ENCODE measurements at regions of chr7 and their contacts with region 1.

Region 1: DNA sequence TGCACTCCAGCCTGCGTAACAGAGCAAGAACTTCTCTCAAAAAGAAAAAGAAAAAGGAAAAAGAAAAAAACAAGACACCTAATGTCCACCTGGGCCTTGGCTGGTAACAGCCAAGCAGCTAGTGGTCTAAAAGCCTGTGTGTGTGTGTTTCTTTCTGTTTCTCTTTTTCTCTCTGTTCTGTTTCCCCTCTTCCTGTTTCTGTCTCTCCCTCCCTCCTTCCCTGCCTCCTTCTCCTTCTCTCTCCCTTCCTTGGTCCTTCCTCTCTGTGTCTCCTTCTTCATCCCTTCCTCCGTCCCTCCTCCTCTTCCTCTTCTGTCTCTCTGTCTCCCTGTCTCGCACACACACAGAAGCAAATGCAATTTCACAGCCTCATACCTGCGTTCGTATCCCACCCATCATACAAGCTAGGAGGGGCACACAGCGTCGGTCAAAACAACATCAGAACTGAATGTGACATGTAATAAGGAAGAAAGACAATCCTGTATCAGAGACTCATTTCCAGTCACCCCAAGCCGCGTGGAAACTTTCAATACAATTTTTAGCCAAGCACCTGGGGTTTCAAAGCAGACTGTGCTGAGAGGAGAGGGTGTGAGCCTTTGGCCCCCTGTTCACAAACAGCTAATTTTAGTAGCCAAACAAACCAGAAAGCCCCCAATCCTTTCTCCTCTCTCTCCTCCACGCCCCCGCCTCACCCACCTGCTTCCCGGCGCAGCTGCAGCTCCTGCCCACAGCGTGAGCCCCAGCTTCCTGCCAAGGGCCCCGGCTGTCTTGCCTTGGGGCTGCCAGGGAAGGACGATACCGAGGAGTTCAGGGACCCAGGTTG is 50.2 kb upstream of the GNA12 start:
- DNase-seq: peak; percentile 83
- H3K4me3 Mint-ChIP-seq: peak overlapping the region; percentile 73
- H3K27ac Mint-ChIP-seq: peak overlapping the region; percentile 96
- H3K4me1 Mint-ChIP-seq: peaks cover 24% of the 10 kb centered on the region
- H3K27me3 Mint-ChIP-seq: no peaks in the 10 kb centered on the region

Region 2: DNA sequence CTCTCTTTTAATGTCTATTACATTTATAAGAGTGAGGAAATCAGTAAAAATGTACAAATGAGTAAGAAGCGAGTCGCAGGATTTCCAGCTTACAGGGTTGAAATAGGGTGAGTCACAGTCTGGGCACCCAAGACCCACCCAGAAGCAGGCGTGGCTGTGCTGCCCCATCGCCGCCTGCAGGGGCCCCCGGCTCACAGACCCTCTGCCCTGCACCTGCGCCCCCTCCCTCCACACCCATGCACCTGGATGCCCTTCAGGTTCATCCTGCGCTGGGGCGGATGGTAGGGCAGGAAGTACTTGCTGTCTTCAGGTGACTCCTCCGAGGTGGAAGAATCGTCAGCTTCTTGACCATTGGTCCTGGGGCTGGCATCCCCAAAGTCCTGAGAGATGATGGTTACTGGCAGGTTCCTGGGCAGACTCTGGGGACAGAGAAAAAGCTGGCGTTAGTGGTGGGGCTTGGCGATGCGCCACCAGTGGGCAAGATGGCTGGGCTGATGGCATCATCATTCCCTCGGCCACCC is 39.9 kb after region 1 on chr7:
- CTCF ChIA-PET with region 1: no interaction called
- intact Hi-C with region 1: loop called (anchors 1 kb)
- DNase-seq: peak; percentile 72
- H3K4me3 Mint-ChIP-seq: no peak overlapping the region
- H3K27ac Mint-ChIP-seq: peak overlapping the region; percentile 99
- H3K4me1 Mint-ChIP-seq: peaks cover 19% of the 10 kb centered on the region
- H3K27me3 Mint-ChIP-seq: no peaks in the 10 kb centered on the region

Region 3: GRCh38 chr7:3154912-3155494 is 260.7 kb after region 1 on chr7:
- CTCF ChIA-PET with region 1: interaction called, 8 read pairs
- intact Hi-C with region 1: loop called (anchors 2 kb)
- DNase-seq: peak; percentile 82
- H3K4me3 Mint-ChIP-seq: no peak overlapping the region
- H3K27ac Mint-ChIP-seq: no peak overlapping the region
- H3K4me1 Mint-ChIP-seq: peaks cover 20% of the 10 kb centered on the region
- H3K27me3 Mint-ChIP-seq: no peaks in the 10 kb centered on the region